ENCODE measurements at regions of chr9 and their contacts with region 1.

Region 1: DNA sequence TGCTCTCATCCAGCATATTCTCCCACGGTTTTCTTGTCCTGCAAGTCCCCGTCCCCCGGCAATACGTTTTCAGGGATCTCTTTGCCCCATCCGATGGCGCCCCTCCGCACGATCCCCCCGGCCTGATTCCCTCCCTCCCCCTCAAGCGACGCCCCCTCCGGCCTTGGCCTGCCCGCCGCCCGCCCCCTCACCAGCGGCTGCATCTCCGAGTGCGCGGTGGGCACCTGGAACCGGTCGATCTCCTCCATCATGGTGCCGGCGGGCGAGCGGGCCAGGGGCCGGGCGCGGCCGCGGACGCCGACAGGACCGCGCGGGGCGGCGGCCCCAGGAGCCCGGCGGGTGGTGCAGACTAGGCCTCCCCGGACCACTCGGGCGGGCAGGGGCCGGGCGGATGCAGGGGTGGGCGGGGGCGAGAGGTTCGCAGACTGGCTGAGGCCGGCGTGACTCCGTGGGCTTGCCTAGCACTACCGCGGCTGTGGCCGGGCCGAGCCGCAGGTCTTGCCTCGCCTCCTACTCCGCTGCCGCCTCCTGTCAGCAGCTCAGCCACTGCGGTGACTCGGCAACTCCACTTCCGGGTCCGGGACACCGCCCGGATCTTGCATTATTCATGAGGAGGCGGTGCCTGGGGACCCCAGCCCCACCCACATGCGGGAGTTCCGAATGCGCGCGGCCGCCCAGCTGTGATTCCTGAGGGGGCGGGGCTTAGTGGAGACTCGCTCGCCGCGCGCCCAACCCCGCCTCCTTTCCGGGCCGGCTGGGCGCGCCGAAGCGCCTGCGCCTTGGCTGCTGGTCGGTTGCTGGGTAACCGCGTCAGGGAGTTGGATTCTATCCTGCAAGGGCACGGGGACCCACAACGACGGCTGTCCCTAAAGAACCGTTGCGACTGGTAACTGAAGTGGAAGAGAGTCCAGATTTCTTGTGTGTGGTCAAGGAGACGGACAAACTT is at the starts of genes DNAI1 and FAM219A:
- DNase-seq: peak; percentile 99
- H3K4me3 Mint-ChIP-seq: peak within 1 kb of the TSS; percentile 86
- H3K27ac Mint-ChIP-seq: no peak within 1 kb of the TSS
- H3K4me1 Mint-ChIP-seq: peaks cover 40% of the 10 kb centered on the region
- H3K27me3 Mint-ChIP-seq: peaks cover 5% of the 10 kb centered on the region
- total RNA-seq, gene DNAI1: 0.19 to 0.69 TPM
- total RNA-seq, gene FAM219A: 13.3 to 13.8 TPM

Region 2: DNA sequence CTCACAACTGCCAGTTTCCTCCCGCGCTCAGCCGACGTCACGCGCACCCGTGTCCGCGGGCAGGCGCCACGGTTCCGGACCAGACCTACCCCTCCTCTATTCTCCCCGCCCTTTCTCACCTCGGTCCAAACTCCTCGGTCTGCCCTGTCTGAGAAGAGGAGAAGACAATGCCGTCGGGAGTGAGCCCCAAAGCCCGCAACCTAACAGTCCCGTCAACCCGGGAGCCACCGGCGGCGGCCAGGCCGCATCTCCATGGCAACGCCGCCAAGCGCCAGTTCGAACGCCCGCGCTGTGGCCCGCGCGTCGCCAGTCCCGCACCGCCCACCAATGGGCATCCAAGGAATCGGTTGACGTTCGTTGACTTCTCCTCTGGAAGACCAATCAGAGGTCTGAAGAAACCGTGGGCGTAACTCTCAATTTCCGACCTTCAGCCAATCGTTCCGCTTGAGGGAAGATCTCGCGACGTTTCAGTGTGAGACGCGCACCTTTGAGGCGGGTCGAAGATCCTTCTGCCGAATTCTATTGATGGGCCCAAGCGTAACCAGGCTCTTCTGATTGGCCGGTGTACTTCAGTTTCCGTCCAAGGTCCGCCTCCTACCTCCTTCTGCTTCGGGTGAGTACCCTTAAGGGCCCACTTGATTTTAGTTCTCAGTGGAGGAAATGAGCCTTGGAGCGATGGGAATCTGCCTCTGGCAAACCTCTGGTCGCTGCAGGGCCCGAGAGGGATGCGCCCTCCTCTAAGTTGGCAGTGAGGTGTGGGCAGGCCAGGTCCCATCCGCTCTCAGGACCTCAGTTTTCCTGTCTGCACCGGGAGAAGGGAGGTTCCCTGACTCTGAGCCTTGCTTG is 129.1 kb before region 1 on chr9 and contains the starts of genes KIF24 and NUDT2:
- CTCF ChIA-PET with region 1: no interaction called
- POLR2A ChIA-PET with region 1: no interaction called
- intact Hi-C with region 1: loop called (anchors 1 kb)
- DNase-seq: peak; percentile 98
- H3K4me3 Mint-ChIP-seq: peak within 1 kb of the TSS; percentile 97
- H3K27ac Mint-ChIP-seq: peak within 1 kb of the TSS; percentile 94
- H3K4me1 Mint-ChIP-seq: peaks cover 30% of the 10 kb centered on the region
- H3K27me3 Mint-ChIP-seq: no peaks in the 10 kb centered on the region
- total RNA-seq, gene KIF24: 5.6 to 5.7 TPM
- total RNA-seq, gene NUDT2: 42.4 to 43.3 TPM

Region 3: DNA sequence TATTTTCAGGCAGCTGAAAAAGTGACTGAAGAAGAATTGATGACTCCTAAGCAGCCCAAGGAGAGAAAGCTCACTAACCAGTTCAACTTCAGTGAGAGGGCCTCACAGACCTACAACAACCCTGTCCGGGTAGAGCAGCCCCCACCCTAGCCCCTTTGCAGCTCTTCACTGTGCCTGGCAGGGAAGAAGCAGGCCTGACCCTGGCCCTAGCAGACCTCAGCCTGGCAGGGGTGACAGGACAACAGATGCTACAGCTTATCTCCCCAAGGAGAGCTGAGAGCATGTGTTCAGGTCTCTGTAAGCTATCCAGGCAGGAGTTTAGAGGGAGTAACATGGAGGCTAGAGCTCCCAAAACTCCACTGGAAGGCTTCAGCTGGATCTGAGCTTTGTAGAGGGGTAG is 32.1 kb after region 1 on chr9:
- CTCF ChIA-PET with region 1: no interaction called
- POLR2A ChIA-PET with region 1: no interaction called
- intact Hi-C with region 1: no loop called
- DNase-seq: no peak
- H3K4me3 Mint-ChIP-seq: no peak overlapping the region
- H3K27ac Mint-ChIP-seq: no peak overlapping the region
- H3K4me1 Mint-ChIP-seq: peaks cover 2% of the 10 kb centered on the region
- H3K27me3 Mint-ChIP-seq: peaks cover 22% of the 10 kb centered on the region

Region 4: GRCh38 chr9:34500623-34501267 is 42.5 kb after region 1 on chr9:
- CTCF ChIA-PET with region 1: interaction called, 13 read pairs
- POLR2A ChIA-PET with region 1: no interaction called
- intact Hi-C with region 1: loop called (anchors 1 kb)
- DNase-seq: peak; percentile 89
- H3K4me3 Mint-ChIP-seq: no peak overlapping the region
- H3K27ac Mint-ChIP-seq: no peak overlapping the region
- H3K4me1 Mint-ChIP-seq: peaks cover 14% of the 10 kb centered on the region
- H3K27me3 Mint-ChIP-seq: no peaks in the 10 kb centered on the region

Region 5: DNA sequence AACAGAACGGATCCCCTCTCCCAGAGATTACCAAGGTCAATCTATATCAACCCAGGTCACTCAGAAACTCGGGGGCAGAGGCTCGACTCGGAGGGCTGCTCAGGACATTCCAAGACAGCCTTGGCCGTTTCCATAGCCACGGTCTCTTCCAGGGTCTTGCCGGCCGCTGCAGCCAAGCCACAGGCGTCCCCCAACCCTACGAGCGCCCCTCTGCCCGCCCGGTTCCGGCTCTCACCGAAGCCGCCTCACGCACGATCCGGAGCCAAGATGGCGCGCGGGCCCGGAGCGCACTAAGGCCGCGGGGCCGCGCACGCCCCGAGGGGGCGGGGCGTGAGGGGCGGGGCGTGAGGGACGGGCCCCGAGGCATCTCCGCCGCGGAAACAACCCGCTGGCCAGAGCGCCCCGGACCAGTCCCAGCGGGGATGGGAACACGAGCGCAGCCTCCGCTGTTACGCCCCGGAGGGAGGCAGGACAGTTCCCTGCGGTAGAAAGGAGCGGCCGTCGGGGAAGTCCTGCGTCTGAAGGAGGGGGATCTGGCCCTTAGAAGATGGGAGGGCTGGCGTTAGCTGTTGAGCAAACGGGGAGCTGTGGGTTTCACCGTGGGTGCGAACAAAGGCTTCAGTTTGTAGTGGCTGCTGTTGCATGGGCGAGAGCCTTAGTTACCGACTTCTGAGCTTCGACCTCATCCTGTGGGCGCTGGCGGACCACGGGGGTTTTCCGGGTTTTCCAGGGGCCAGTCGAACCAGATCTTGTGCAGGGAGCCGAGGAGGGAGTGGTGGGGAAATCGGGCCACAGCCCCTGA is 153.7 kb after region 1 on chr9 and contains the start of gene RPP25L:
- CTCF ChIA-PET with region 1: no interaction called
- POLR2A ChIA-PET with region 1: no interaction called
- intact Hi-C with region 1: loop called (anchors 2 kb)
- DNase-seq: peak; percentile 88
- H3K4me3 Mint-ChIP-seq: peak within 1 kb of the TSS; percentile 89
- H3K27ac Mint-ChIP-seq: peak within 1 kb of the TSS; percentile 85
- H3K4me1 Mint-ChIP-seq: peaks cover 21% of the 10 kb centered on the region
- H3K27me3 Mint-ChIP-seq: no peaks in the 10 kb centered on the region
- total RNA-seq, gene RPP25L: 29.3 to 31.1 TPM

Measured in activated CD4-positive, alpha-beta memory T cell treated with anti-CD3 and anti-CD28 coated beads for 36 hours (primary cell).